Adrenal gland (tissue), 19 donors: ENCODE measurements at regions of chr6 and their contacts with region 1.

Region 1: DNA sequence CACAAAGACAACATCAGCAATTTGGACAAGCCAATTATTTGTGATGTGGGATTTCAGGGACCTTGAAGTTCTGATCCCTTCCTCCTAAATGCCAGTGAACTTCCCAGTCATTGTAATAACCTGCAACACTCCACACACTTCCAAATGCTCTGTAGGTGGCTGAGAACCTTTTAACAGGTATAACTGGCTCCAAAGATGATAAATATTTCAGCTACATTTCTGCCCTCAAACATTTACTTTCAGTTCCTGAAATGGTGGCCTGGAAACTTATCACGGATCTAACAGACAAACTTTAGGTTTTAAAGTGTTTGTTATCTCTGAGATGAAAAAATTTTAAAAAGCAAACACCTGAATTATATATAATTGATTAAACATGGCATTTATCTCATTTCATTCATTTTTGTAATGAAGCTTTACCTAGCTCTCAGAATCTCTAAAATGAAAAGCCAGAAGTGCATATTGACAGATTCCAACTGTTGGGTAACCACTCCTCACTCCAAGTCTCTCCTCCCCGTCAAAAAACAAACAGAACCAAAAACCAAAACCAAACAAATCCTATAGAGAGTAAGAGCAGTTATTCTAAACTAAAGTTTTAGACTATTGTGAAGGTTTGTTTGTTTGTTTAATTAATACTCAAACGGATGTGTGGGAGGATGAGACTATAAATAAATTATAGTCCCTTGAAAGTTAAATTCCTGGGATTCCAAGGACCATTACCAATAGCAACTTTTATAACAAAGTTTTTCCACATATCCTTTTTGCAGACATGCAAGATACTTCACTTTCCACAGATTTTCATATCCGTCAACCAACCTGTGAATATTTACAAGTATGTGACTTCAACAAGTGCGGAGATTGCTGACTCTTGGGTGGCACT is 12.4 kb upstream of the KIAA0408 start:
- DNase-seq: no peak
- H3K4me3 ChIP-seq: no peak overlapping the region
- H3K27ac ChIP-seq: no peak overlapping the region
- H3K4me1 ChIP-seq: no peaks in the 10 kb centered on the region
- H3K27me3 ChIP-seq: no peaks in the 10 kb centered on the region
- CTCF ChIP-seq: no peak
- POLR2A ChIP-seq: no peak

Region 2: DNA sequence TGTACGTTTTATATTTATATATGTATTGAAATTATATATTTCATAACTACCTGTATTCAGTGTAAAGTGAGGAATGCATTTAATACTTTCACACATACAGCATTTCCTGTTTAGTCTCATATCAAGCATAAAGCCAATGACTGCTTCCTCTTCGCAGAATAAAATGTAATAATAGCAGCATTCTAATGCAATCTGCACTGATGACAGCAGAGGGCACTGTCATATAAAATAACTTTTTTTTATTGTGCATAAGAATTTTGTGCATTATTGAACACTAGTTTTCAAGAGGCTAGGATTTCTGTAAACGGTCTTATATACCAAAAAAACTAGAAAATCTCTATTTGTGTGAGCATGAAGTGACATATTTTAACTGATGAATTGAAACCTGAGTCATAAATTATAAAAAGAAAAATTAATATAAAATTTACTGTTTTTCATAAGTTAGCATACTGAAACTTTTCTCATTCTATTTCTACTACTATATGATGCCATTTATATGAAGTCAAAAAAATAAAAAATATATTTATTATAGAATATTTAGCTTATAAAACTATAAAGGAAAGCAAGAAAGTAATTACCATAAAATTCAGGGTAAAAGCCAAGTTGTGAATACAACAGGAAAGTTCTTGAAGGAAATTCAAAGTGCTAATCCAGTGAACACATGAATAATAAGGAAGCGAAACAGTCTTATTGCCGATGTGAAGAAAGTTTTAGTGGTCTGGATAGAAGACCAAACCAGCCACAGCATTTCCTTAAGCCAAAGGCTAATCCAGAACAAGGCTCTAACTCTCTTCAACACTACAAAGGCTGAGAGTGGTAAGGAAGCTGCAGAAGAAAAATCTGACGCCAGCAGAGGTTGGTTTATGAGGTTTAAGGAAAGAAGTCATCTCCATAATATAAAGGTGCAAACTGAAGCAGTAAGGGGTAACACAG is 168.6 kb before region 1 on chr6:
- intact Hi-C with region 1: no loop called
- DNase-seq: peak; percentile 15 to 69 (median 28)
- H3K4me3 ChIP-seq: no peak overlapping the region
- H3K27ac ChIP-seq: no peak overlapping the region
- H3K4me1 ChIP-seq: peaks cover 0 to 10% of the 10 kb centered on the region in 2 donors
- H3K27me3 ChIP-seq: no peaks in the 10 kb centered on the region
- CTCF ChIP-seq: peak; percentile 49 to 75 (median 70)
- POLR2A ChIP-seq: no peak

Region 3: DNA sequence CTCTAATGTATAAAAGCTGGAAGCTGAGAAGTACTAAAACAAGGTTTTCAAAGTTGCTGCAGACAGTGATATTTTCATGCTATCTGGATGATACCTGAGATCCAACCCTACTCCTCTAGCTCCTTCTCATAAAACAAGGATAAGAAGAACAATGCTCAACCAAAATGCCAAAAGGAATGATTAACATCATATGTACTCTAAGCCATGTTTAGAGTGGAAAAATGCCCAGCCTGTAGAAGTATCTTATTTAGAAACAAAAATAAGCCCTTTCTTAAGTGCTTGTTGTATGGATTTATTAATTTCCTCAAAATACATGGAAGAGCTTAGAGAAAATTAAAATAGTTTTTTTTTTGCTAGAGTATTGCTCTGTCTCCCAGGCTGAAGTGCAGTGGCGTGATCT is 151.9 kb before region 1 on chr6:
- intact Hi-C with region 1: no loop called
- DNase-seq: no peak
- H3K4me3 ChIP-seq: no peak overlapping the region
- H3K27ac ChIP-seq: no peak overlapping the region
- H3K4me1 ChIP-seq: no peaks in the 10 kb centered on the region
- H3K27me3 ChIP-seq: no peaks in the 10 kb centered on the region
- CTCF ChIP-seq: no peak
- POLR2A ChIP-seq: no peak

Region 4: DNA sequence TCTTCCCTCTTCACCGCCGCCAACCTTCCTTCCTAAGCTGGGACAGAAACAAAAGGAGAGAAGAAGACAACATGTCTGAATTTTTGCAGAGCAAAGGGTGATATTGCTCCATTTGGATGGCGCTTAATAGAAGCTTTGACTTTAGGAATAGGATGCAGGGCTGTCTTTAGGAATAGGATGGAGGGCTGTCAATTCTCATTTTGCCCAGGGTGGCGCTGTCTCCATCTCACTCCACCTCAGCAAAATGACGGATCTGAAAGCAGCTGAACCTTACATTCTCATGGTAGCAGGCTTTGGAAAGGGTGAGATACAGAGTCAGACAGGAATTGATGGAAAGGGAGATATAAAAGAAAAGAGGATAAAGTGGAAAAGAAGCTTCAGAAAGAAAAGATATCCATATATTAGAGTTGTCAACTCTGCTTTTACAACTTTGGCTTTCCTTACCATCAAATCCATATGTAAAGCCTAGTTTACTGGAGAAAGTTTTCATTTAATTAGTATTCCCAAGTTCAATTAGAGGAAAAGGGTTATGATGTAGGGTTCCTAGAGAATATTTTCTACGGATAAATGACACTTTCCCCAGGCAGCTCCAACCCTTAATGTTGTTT is 45.2 kb after region 1 on chr6:
- intact Hi-C with region 1: loop called in 1 of 2 experiments (anchors 5 kb)
- DNase-seq: peak in 6 of 7 donors; percentile 22 to 79 (median 33)
- H3K4me3 ChIP-seq: peak overlapping the region in 2 of 4 donors; percentile 41 to 63
- H3K27ac ChIP-seq: peak overlapping the region in 1 of 5 donors; percentile 69
- H3K4me1 ChIP-seq: peaks cover 11 to 17% of the 10 kb centered on the region in 2 donors
- H3K27me3 ChIP-seq: peaks cover 18% of the 10 kb centered on the region
- CTCF ChIP-seq: peak; percentile 34 to 67 (median 49)
- POLR2A ChIP-seq: no peak